PC-9 (cell line): ENCODE measurements at regions of chr10 and their contacts with region 1.

Region 1: GRCh38 chr10:47024399-47025252 is 113.4 kb downstream of the PTPN20 start:
- DNase-seq: peak; percentile 50 to 81
- H3K4me3 ChIP-seq: no peak overlapping the region
- H3K27ac ChIP-seq: no peak overlapping the region
- H3K4me1 ChIP-seq: no peaks in the 10 kb centered on the region
- H3K27me3 ChIP-seq: no peaks in the 10 kb centered on the region
- CTCF ChIP-seq: peak; percentile 93

Region 2: GRCh38 chr10:46228563-46229071 is 796.0 kb before region 1 on chr10:
- CTCF ChIA-PET with region 1: no interaction called
- POLR2A ChIA-PET with region 1: no interaction called
- intact Hi-C with region 1: loop called (anchors 10 kb)
- DNase-seq: peak; percentile 60 to 84
- H3K4me3 ChIP-seq: no peak overlapping the region
- H3K27ac ChIP-seq: no peak overlapping the region
- H3K4me1 ChIP-seq: peaks cover 24% of the 10 kb centered on the region
- H3K27me3 ChIP-seq: no peaks in the 10 kb centered on the region
- CTCF ChIP-seq: peak; percentile 87

Region 3: DNA sequence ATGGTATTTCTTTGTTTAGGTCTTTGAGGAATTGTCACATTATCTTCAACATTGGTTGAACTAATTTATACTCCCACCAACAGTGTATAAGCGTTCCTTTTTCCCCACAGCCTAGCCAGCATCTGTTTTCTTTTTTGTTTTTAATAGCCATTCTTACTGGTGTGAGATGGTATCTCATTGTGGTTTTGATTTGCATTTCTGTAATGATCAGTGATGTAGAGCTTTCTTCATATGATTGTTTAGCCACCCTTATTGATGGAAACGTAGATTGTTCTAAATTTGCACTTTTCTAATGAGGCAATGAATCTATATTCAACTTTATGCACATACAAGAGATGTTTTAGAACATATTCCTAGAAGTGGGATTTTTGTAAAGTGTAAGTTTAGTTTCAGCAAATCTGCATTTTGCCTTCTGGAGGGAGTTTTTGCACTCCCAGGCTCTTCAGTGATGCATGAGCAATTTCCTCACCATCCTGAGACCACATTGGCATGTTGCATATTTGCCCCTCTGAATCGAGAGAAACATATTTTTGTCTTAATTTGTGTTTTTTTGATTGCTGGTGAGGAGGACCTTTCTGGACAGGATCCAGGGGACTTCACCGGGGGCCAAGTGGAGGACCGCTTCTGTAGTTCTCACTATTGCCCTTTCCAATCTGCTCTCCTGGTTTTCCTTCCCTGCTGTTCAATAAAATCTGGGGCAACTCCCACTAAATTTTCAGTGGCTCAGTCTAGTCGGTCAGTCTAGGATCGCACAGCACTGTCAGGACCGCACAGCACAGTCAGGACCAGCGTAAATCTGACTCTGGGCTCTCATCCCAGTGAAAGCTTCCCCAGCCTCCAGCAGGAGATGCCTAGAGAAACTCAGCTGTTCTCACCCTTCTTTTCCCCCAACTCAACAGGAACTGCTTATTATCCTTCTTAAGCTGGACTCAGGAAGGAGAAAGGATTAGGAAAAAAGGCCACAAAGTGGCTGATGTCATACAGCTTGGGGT is 43.6 kb after region 1 on chr10:
- CTCF ChIA-PET with region 1: no interaction called
- POLR2A ChIA-PET with region 1: no interaction called
- intact Hi-C with region 1: no loop called
- DNase-seq: no peak
- H3K4me3 ChIP-seq: no peak overlapping the region
- H3K27ac ChIP-seq: no peak overlapping the region
- H3K4me1 ChIP-seq: no peaks in the 10 kb centered on the region
- H3K27me3 ChIP-seq: no peaks in the 10 kb centered on the region
- CTCF ChIP-seq: no peak

Region 4: DNA sequence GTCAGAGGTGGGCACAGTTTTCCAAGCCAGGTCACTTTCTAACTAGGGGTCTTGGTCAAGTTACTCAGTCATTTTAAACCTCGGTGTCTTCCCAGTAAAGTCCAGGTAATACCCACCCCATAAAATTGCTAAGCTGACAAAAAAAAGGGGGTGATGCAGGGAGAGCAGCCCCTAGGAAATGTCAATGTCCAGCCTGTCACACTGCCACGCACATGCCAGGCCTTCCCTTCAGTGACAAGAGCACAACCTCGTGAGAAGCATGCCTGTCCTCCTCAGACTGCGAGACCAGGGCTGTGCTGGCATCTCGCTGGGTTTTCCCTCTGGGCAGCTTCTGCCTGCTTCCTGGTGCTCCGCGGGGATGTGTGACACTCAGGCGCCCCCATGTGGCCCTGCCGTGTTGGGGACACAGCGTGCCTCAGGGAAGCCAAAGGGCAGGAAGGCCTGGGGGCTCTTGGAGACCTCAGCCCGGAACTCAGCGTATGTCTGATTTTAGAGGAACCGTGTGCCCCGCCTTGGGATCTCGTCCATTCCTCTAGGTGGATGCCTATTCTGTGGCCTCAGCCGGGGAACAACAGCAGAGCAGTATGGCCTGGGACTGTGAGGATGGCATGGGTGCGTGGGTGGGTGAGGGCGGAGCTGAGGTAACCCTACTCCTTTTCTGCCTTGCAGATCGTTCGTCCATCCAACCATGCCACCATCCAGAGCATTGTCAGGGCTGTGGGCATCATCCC is 287.5 kb after region 1 on chr10:
- CTCF ChIA-PET with region 1: interaction called, 19 read pairs
- POLR2A ChIA-PET with region 1: no interaction called
- intact Hi-C with region 1: loop called (anchors 1 kb)
- DNase-seq: peak; percentile 71 to 89
- H3K4me3 ChIP-seq: no peak overlapping the region
- H3K27ac ChIP-seq: no peak overlapping the region
- H3K4me1 ChIP-seq: peaks cover 8% of the 10 kb centered on the region
- H3K27me3 ChIP-seq: no peaks in the 10 kb centered on the region
- CTCF ChIP-seq: peak; percentile 95